Heart left ventricle (tissue), 16 donors: ENCODE measurements at regions of chr9 and their contacts with region 1.

Region 1: DNA sequence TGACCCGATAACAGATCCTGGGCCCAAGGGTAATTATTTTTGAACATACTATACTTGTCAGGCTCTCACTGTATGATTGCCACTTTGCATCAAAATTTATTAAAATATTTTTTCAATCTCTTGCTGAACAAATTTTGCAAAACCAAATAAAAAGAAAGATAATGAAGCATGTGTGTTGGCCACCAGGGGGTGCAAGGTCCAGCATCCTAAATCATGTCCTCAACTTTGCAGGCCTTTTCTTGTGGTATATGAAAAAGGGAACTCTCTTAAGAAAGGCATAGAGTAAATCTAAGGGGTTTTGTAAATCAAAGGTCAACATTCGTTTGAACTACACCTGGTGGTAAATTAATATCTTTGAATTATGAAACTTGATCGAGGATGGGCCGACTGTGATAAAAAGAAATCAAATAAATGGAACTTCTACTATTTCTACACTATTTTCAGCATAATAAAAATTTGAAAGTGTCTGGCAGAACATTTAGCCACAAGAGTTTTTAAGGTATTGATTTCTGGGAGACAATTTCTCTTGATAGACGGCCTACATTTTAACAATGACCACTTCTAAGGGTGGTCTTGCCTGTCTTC is 676.5 kb downstream of the DMRTA1 start:
- DNase-seq: peak in 1 of 5 donors; percentile 20
- ATAC-seq: no peak
- H3K4me3 ChIP-seq: no peak overlapping the region
- H3K27ac ChIP-seq: no peak overlapping the region
- H3K4me1 ChIP-seq: no peaks in the 10 kb centered on the region
- H3K27me3 ChIP-seq: no peaks in the 10 kb centered on the region
- CTCF ChIP-seq: peak; percentile 35 to 70 (median 54)
- POLR2A ChIP-seq: no peak

Region 2: DNA sequence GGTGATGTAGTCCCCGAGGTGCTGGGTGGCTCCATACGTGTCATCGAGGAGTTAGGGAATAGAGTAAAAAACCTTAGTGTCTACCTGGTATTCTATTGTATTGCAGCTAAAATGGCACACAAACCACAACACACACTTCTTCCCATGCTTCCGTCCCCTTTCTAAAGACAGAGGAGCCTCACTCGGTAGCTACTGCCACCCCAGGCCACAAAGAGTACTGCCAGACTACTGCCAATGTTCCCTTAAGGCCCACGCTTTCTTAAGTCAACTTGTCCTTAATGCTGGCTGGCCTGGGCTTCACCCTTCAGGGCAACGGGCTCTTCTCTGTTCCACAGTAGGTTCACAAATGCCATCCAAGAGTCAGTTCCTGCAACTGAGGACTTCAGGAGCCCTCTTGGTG is 29.9 kb after region 1 on chr9:
- intact Hi-C with region 1: no loop called
- DNase-seq: no peak
- ATAC-seq: no peak
- H3K4me3 ChIP-seq: no peak overlapping the region
- H3K27ac ChIP-seq: no peak overlapping the region
- H3K4me1 ChIP-seq: no peaks in the 10 kb centered on the region
- H3K27me3 ChIP-seq: no peaks in the 10 kb centered on the region
- CTCF ChIP-seq: no peak
- POLR2A ChIP-seq: no peak

Region 3: GRCh38 chr9:23483566-23483965 is 360.4 kb after region 1 on chr9:
- intact Hi-C with region 1: loop called in 1 of 10 experiments (anchors 10 kb)
- DNase-seq: no peak
- ATAC-seq: no peak
- H3K4me3 ChIP-seq: no peak overlapping the region
- H3K27ac ChIP-seq: no peak overlapping the region
- H3K4me1 ChIP-seq: no peaks in the 10 kb centered on the region
- H3K27me3 ChIP-seq: no peaks in the 10 kb centered on the region
- CTCF ChIP-seq: no peak
- POLR2A ChIP-seq: no peak

Region 4: GRCh38 chr9:23492126-23493002 is 369.2 kb after region 1 on chr9:
- intact Hi-C with region 1: loop called in 6 of 10 experiments (anchors 2 to 10 kb)
- DNase-seq: no peak
- ATAC-seq: peak in 2 of 4 donors; percentile 39 to 57
- H3K4me3 ChIP-seq: no peak overlapping the region
- H3K27ac ChIP-seq: no peak overlapping the region
- H3K4me1 ChIP-seq: no peaks in the 10 kb centered on the region
- H3K27me3 ChIP-seq: no peaks in the 10 kb centered on the region
- CTCF ChIP-seq: peak in 11 of 12 donors; percentile 17 to 62 (median 40)
- POLR2A ChIP-seq: no peak

Region 5: GRCh38 chr9:23887781-23888180 is 764.6 kb after region 1 on chr9:
- intact Hi-C with region 1: loop called in 2 of 10 experiments (anchors 5 to 10 kb)
- DNase-seq: no peak
- ATAC-seq: no peak
- H3K4me3 ChIP-seq: no peak overlapping the region
- H3K27ac ChIP-seq: no peak overlapping the region
- H3K4me1 ChIP-seq: no peaks in the 10 kb centered on the region
- H3K27me3 ChIP-seq: no peaks in the 10 kb centered on the region
- CTCF ChIP-seq: no peak
- POLR2A ChIP-seq: no peak